ENCODE measurements at regions of chr10 and their contacts with region 1.

Region 1: GRCh38 chr10:68901104-68901927 is at the start of gene DDX50:
- DNase-seq: peak; percentile 99
- H3K4me3 Mint-ChIP-seq: peak within 1 kb of the TSS; percentile 93
- H3K27ac Mint-ChIP-seq: peak within 1 kb of the TSS; percentile 97
- H3K4me1 Mint-ChIP-seq: peaks cover 40% of the 10 kb centered on the region
- H3K27me3 Mint-ChIP-seq: no peaks in the 10 kb centered on the region
- total RNA-seq, gene DDX50: 62.1 to 66.0 TPM

Region 2: GRCh38 chr10:68074775-68075549 is 826.4 kb before region 1 on chr10 and contains the start of gene HERC4:
- CTCF ChIA-PET with region 1: no interaction called
- intact Hi-C with region 1: loop called (anchors 2 kb)
- DNase-seq: peak; percentile 92
- H3K4me3 Mint-ChIP-seq: peak within 1 kb of the TSS; percentile 97
- H3K27ac Mint-ChIP-seq: peak within 1 kb of the TSS; percentile 91
- H3K4me1 Mint-ChIP-seq: peaks cover 33% of the 10 kb centered on the region
- H3K27me3 Mint-ChIP-seq: no peaks in the 10 kb centered on the region
- total RNA-seq, gene HERC4: 42.2 to 45.0 TPM

Region 3: DNA sequence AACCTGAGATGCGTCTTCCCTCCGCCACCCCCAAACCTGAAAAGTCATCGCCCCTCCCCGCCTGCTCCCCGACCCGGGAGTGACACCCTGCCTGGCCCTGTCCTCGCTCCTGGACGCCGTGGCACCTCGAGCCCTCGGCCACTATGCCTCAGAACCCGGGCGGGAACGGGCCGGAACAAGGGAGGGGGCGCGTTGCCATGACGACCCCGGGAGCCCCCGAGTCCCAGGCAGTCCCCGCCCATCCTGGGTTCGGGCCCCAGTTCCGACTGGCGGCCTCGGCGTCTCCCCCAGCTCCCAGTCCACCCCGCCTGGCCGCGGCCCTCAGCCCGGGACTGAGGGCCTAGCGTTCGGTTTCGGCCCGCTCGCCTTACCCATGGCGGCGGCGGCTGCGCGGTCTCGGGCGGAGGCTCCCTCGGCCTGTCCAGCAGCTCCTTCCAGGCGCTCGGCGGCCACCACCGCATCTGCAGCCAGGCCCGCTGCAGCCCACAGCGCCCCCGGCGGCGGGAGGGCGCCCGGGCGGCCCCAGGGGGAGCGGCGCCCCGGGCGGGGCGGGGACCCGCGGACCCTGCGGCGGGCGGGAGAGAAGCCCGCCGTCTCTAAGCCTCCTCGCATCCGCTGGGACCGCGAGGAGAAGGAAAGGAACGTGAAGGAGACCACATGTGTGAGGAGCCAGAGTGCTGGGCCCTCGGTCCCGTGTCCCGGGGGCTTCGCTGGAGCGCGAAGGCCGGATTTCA is 494.3 kb before region 1 on chr10 and contains the start of gene RUFY2:
- CTCF ChIA-PET with region 1: no interaction called
- intact Hi-C with region 1: loop called (anchors 2 kb)
- DNase-seq: peak; percentile 73
- H3K4me3 Mint-ChIP-seq: peak within 1 kb of the TSS; percentile 89
- H3K27ac Mint-ChIP-seq: peak within 1 kb of the TSS; percentile 59
- H3K4me1 Mint-ChIP-seq: peaks cover 16% of the 10 kb centered on the region
- H3K27me3 Mint-ChIP-seq: no peaks in the 10 kb centered on the region
- total RNA-seq, gene RUFY2: 5.2 to 6.7 TPM

Region 4: GRCh38 chr10:68600041-68600778 is 301.1 kb before region 1 on chr10:
- CTCF ChIA-PET with region 1: no interaction called
- intact Hi-C with region 1: loop called (anchors 1 kb)
- DNase-seq: peak; percentile 64
- H3K4me3 Mint-ChIP-seq: peak overlapping the region; percentile 83
- H3K27ac Mint-ChIP-seq: peak overlapping the region; percentile 84
- H3K4me1 Mint-ChIP-seq: peaks cover 28% of the 10 kb centered on the region
- H3K27me3 Mint-ChIP-seq: no peaks in the 10 kb centered on the region

Region 5: DNA sequence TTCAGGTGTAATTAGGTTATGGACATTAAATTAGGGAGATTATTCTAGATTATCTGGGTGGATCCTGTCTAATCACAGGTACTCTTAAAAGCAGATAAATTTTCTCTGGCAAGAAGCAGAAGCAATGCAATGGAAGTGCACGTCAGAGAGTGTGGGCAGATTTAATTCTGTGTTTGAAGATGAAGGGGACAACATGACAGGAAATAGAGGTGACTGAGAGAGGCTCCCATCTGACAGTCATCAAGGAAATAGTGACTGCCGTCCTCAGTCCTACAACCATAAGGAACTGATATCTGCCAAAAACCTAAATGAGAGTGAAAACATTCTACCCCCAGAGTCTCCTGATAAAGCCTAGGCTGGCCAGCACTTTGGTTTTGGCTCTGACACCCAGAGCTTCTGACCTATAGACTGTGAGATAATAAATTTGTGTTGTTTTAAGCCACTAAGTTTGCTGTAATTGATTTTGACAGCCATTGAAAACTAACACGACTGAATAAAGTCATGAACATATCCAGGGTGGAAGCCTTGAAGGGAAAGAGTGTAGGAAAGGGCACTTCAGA is 30.7 kb before region 1 on chr10:
- CTCF ChIA-PET with region 1: no interaction called
- intact Hi-C with region 1: loop called (anchors 1 kb)
- DNase-seq: peak; percentile 60
- H3K4me3 Mint-ChIP-seq: no peak overlapping the region
- H3K27ac Mint-ChIP-seq: no peak overlapping the region
- H3K4me1 Mint-ChIP-seq: peaks cover 18% of the 10 kb centered on the region
- H3K27me3 Mint-ChIP-seq: no peaks in the 10 kb centered on the region

Region 6: GRCh38 chr10:69179743-69180524 is 278.6 kb after region 1 on chr10 and contains the start of gene SUPV3L1:
- CTCF ChIA-PET with region 1: no interaction called
- intact Hi-C with region 1: loop called (anchors 1 kb)
- DNase-seq: peak; percentile 92
- H3K4me3 Mint-ChIP-seq: peak within 1 kb of the TSS; percentile 92
- H3K27ac Mint-ChIP-seq: peak within 1 kb of the TSS; percentile 98
- H3K4me1 Mint-ChIP-seq: peaks cover 32% of the 10 kb centered on the region
- H3K27me3 Mint-ChIP-seq: no peaks in the 10 kb centered on the region
- total RNA-seq, gene SUPV3L1: 38.4 to 41.1 TPM

Measured in activated naive CD4-positive, alpha-beta T cell treated with anti-CD3 and anti-CD28 coated beads for 36 hours (primary cell).